CD4-positive, alpha-beta memory T cell (primary cell): ENCODE measurements at regions of chr7 and their contacts with region 1.

Region 1: DNA sequence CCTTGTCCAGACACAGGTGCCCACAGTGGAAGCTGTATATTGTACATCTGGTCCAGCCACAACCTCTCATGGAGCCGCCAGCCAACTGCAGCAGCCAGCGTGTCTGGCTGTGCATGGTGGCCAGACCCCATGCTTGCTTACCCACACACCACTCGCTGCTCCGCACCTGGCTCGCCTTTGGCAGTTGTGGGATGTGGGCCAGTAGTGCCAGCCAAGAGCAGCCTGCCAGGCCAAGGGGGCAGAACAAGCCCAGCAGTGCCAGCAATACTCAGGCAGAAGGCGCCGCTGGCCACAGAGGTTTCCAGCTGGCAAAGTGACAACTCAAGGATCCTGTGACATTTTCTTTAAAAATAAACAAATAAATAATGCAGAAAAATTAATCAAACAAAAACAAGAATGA is 11.7 kb upstream of the TMEM243 start:
- DNase-seq: no peak
- H3K4me3 ChIP-seq: no peak overlapping the region
- H3K4me3 Mint-ChIP-seq: no peak overlapping the region
- H3K27ac ChIP-seq: no peak overlapping the region
- H3K27ac Mint-ChIP-seq: no peak overlapping the region
- H3K4me1 ChIP-seq: no peaks in the 10 kb centered on the region
- H3K4me1 Mint-ChIP-seq: no peaks in the 10 kb centered on the region
- H3K27me3 ChIP-seq: no peaks in the 10 kb centered on the region
- H3K27me3 Mint-ChIP-seq: peaks cover 2% of the 10 kb centered on the region in 2 donors

Region 2: GRCh38 chr7:86926732-86927131 is 304.5 kb before region 1 on chr7:
- CTCF ChIA-PET with region 1: interaction called, 20 read pairs
- POLR2A ChIA-PET with region 1: no interaction called
- intact Hi-C with region 1: no loop called
- DNase-seq: peak in 4 of 5 donors; percentile 39 to 60 (median 53)
- H3K4me3 ChIP-seq: no peak overlapping the region
- H3K4me3 Mint-ChIP-seq: no peak overlapping the region
- H3K27ac ChIP-seq: no peak overlapping the region
- H3K27ac Mint-ChIP-seq: peak overlapping the region in 1 of 7 donors; percentile 63
- H3K4me1 ChIP-seq: no peaks in the 10 kb centered on the region
- H3K4me1 Mint-ChIP-seq: no peaks in the 10 kb centered on the region
- H3K27me3 ChIP-seq: no peaks in the 10 kb centered on the region
- H3K27me3 Mint-ChIP-seq: peaks cover 0 to 3% of the 10 kb centered on the region in 2 donors

Region 3: DNA sequence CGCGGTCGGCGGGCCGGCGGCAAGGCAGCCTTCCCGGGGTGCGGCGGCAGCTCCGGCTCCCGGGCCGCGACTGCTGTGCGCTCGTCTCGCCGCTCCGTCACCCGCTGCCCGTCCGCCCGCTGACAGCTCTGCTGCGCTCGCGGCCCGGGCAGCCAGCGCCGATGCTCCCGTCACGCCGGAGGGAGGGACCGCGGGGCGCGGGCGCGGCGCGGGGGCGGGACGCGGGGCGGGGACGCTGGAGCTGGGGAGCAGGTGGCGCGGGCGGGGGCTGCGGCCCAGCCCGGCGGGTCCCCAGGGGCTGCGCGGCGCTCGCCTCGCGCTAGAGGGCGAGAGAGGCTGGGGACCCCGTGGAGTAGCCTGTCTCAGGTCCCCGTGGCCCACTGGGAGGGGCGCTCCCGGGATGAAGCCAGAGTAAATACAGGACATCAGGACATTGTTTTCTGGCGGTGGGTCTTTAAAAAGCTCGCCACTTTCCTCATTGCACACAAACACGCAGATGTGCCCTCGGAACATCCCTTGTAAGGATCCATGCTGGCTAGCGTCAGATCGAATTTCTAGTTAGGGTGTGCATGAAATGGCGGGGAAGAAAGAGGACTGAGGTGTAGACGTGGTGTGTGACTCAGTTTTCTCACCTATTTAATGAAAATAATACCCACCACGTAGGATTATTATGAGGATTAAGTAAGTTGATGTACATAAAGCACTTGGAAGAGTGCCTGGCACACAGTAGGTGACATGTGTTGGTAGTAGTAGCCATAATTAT is 171.6 kb before region 1 on chr7 and contains the start of gene ELAPOR2:
- CTCF ChIA-PET with region 1: interaction called, 3 read pairs
- POLR2A ChIA-PET with region 1: no interaction called
- intact Hi-C with region 1: loop called (anchors 2 kb)
- DNase-seq: peak; percentile 81 to 83 (median 82)
- H3K4me3 ChIP-seq: peak within 1 kb of the TSS; percentile 59 to 70
- H3K4me3 Mint-ChIP-seq: peak within 1 kb of the TSS; percentile 83 to 91 (median 88)
- H3K27ac ChIP-seq: peak within 1 kb of the TSS; percentile 53
- H3K27ac Mint-ChIP-seq: peak within 1 kb of the TSS; percentile 45 to 93 (median 86)
- H3K4me1 ChIP-seq: peaks cover 14% of the 10 kb centered on the region
- H3K4me1 Mint-ChIP-seq: peaks cover 12 to 20% (median 15%) of the 10 kb centered on the region in 4 donors
- H3K27me3 ChIP-seq: no peaks in the 10 kb centered on the region
- H3K27me3 Mint-ChIP-seq: peaks cover 0 to 3% of the 10 kb centered on the region in 2 donors
- total RNA-seq, gene ELAPOR2: 8.8 to 11.8 TPM

Region 4: DNA sequence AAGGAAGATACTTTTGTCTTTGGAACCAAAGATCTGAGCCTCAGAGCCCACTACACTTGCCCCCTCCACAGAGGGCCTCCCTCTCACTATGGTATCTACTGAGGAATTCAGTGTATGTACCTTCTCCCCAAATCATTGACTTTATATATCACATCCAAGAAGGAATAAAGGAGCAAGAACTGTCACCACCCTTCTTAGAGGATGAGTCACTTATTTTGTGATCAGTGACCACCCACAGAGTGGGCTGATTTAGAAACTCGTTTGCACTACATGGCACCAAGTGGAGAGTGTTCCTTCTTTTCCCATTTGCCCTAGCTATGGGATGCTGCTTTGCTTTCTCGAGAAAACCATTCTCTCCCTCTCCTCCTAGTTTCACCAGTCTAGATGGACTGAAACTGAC is 17.4 kb before region 1 on chr7:
- CTCF ChIA-PET with region 1: interaction called, 12 read pairs
- POLR2A ChIA-PET with region 1: interaction called, 3 read pairs
- intact Hi-C with region 1: loop called (anchors 2 kb)
- DNase-seq: no peak
- H3K4me3 ChIP-seq: no peak overlapping the region
- H3K4me3 Mint-ChIP-seq: peak overlapping the region; percentile 38 to 94 (median 80)
- H3K27ac ChIP-seq: peak overlapping the region; percentile 34
- H3K27ac Mint-ChIP-seq: peak overlapping the region; percentile 29 to 94 (median 75)
- H3K4me1 ChIP-seq: peaks cover 93% of the 10 kb centered on the region
- H3K4me1 Mint-ChIP-seq: peaks cover 65 to 97% (median 80%) of the 10 kb centered on the region in 4 donors
- H3K27me3 ChIP-seq: no peaks in the 10 kb centered on the region
- H3K27me3 Mint-ChIP-seq: no peaks in the 10 kb centered on the region

Region 5: DNA sequence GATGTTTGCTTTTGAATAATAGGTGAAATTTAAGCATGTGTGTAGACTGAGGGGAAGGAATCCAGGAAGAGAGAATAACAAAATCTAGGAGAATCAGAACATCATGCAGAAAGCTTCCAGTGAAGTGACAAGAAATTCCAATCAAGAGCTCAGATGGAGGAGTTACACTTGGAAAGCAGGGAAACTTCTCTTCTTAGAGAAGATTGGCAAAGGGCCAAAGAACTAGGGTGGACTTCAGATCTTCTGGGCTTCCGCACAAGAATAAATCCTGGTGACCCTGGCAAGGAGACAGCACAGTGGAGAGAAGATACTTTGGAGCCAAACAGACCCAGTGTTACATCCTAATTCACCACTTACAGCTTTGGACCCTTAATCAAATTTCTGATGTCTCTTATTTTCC is 20.9 kb after region 1 on chr7:
- CTCF ChIA-PET with region 1: interaction called, 11 read pairs
- POLR2A ChIA-PET with region 1: no interaction called
- intact Hi-C with region 1: no loop called
- DNase-seq: no peak
- H3K4me3 ChIP-seq: no peak overlapping the region
- H3K4me3 Mint-ChIP-seq: no peak overlapping the region
- H3K27ac ChIP-seq: no peak overlapping the region
- H3K27ac Mint-ChIP-seq: no peak overlapping the region
- H3K4me1 ChIP-seq: no peaks in the 10 kb centered on the region
- H3K4me1 Mint-ChIP-seq: no peaks in the 10 kb centered on the region
- H3K27me3 ChIP-seq: no peaks in the 10 kb centered on the region
- H3K27me3 Mint-ChIP-seq: peaks cover 8 to 21% of the 10 kb centered on the region in 2 donors